CD4-positive, alpha-beta memory T cell (primary cell): ENCODE measurements at regions of chr1 and their contacts with region 1.

Region 1: GRCh38 chr1:27872059-27872801 is at the start of gene THEMIS2:
- DNase-seq: peak; percentile 67 to 77 (median 68)
- H3K4me3 ChIP-seq: peak within 1 kb of the TSS; percentile 83 to 96
- H3K4me3 Mint-ChIP-seq: peak within 1 kb of the TSS; percentile 95 to 99 (median 97)
- H3K27ac ChIP-seq: peak within 1 kb of the TSS; percentile 53
- H3K27ac Mint-ChIP-seq: peak within 1 kb of the TSS; percentile 76 to 96 (median 93)
- H3K4me1 ChIP-seq: peaks cover 65% of the 10 kb centered on the region
- H3K4me1 Mint-ChIP-seq: peaks cover 25 to 69% (median 43%) of the 10 kb centered on the region in 4 donors
- H3K27me3 ChIP-seq: no peaks in the 10 kb centered on the region
- H3K27me3 Mint-ChIP-seq: no peaks in the 10 kb centered on the region
- total RNA-seq, gene THEMIS2: 60.5 to 64.8 TPM

Region 2: GRCh38 chr1:27891196-27891889 is 19.1 kb after region 1 on chr1:
- CTCF ChIA-PET with region 1: no interaction called
- POLR2A ChIA-PET with region 1: interaction called, 17 read pairs
- intact Hi-C with region 1: loop called (anchors 2 kb)
- DNase-seq: peak in 4 of 5 donors; percentile 33 to 67 (median 50)
- H3K4me3 ChIP-seq: no peak overlapping the region
- H3K4me3 Mint-ChIP-seq: peak overlapping the region in 6 of 8 donors; percentile 8 to 80 (median 39)
- H3K27ac ChIP-seq: peak overlapping the region; percentile 52
- H3K27ac Mint-ChIP-seq: peak overlapping the region; percentile 43 to 96 (median 89)
- H3K4me1 ChIP-seq: peaks cover 60% of the 10 kb centered on the region
- H3K4me1 Mint-ChIP-seq: peaks cover 31 to 77% (median 54%) of the 10 kb centered on the region in 4 donors
- H3K27me3 ChIP-seq: no peaks in the 10 kb centered on the region
- H3K27me3 Mint-ChIP-seq: no peaks in the 10 kb centered on the region

Region 3: DNA sequence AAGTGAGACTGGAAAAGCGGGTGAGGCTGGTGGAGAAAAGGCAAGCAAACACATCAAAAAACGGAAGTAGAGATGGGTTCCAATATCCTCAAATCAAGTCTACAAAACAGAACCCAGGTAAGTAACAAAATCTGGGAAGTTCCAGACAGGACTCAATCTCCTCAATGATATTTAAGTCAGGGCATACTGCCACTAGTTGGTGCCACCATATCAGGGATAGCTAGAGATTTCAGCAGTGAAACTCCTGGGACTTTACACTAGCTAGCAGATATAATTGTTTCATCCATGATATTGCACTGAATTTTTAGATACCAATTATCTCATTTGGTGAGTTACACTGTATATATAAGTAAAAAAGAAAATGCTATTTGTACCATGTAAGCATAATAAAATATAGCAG is 164.2 kb after region 1 on chr1:
- CTCF ChIA-PET with region 1: no interaction called
- POLR2A ChIA-PET with region 1: no interaction called
- intact Hi-C with region 1: no loop called
- DNase-seq: no peak
- H3K4me3 ChIP-seq: no peak overlapping the region
- H3K4me3 Mint-ChIP-seq: peak overlapping the region in 1 of 8 donors; percentile 26
- H3K27ac ChIP-seq: no peak overlapping the region
- H3K27ac Mint-ChIP-seq: peak overlapping the region in 2 of 7 donors; percentile 3 to 78
- H3K4me1 ChIP-seq: no peaks in the 10 kb centered on the region
- H3K4me1 Mint-ChIP-seq: peaks cover 0 to 1% (median 0%) of the 10 kb centered on the region in 4 donors
- H3K27me3 ChIP-seq: no peaks in the 10 kb centered on the region
- H3K27me3 Mint-ChIP-seq: no peaks in the 10 kb centered on the region